ENCODE measurements at regions of chr1 and their contacts with region 1.

Region 1: DNA sequence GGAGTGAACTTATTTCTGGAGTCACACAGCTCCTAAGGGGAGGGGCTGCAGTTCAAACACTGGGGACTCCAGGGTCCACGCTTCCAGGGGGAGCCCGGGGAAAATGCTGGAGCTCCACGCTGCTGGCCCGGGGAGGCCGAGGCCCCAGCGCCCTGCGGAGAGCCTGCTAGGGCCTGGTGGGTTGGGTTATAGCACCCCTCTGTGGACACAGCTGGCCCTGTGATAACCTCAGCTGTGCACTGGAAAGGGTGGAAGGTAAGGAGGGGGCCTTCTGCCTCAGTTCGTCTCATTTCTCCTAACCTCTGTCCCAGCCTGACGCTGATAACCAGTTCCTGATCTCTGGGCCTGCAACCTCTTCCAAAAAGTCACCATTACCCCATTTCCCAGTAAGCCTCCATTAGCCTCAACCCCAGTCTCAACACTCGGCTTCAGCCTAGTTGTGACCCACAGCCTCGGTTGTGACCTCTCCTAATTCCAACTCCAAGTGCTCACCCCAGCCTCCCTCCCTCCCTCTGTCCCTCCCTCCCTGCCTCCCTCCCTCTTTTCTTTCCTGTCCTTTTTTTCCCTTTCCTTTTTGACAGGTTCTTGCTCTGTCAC is 7.1 kb downstream of the NBL1 start:
- DNase-seq: peak in 6 of 10 donors; percentile 33 to 77 (median 44)
- H3K4me3 ChIP-seq: peak overlapping the region in 10 of 59 donors; percentile 1 to 33 (median 10)
- H3K27ac ChIP-seq: peak overlapping the region in 43 of 59 donors; percentile 1 to 84 (median 61)
- H3K27me3 ChIP-seq: no peaks in the 10 kb centered on the region
- CTCF ChIP-seq: peak in 53 of 56 donors; percentile 38 to 83 (median 66)

Region 2: GRCh38 chr1:19240673-19241538 is 410.3 kb before region 1 on chr1:
- intact Hi-C with region 1: loop called in 1 of 2 experiments (anchors 5 kb)
- DNase-seq: peak in 9 of 10 donors; percentile 32 to 73 (median 60)
- H3K4me3 ChIP-seq: no peak overlapping the region
- H3K27ac ChIP-seq: peak overlapping the region in 52 of 59 donors; percentile 1 to 82 (median 56)
- H3K27me3 ChIP-seq: no peaks in the 10 kb centered on the region
- CTCF ChIP-seq: peak; percentile 72 to 99 (median 94)

Region 3: DNA sequence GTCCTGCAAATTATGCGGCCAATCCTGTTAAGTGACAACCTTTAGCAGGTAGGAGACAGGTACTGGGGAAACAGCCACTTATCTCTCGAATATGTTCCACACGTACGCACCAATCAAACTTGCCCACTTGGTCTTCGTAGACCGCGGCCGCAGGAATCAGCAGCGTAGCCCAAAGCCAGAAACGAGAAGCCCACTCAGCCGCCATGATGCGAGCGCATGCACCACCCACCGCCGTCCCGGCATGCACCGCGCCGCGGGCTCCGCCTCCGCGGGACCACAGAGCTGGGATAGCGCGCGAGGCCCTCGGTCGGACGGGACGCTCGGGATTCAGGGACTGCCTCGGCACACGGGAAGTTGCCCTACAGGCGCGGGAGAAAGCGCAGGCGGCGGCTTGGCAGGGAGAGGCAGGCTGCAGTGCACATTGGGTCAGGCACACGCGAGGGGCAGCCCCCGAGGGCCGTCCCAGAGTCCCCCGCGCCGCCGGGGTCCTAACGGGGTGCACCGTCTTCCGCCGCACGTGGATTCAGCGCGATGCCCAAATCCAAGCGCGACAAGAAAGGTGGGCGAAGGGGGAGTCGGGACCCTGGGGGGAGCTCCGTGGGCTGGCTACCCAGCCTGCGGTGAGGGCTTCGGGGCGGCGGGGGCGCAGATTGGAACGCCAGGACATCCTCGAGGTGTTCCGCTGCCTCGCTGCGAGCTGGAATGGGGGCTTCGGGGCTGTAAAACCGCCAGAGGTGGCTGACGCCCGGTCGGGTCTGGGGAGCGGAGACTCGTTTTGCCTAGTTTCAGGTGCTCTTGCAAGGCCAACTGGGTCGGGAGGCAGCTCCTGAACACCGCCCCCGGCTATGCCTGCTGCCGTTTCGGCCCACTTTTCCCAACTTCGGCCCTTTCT is 399.7 kb before region 1 on chr1 and contains the starts of genes EMC1 and MRTO4:
- intact Hi-C with region 1: loop called in 1 of 2 experiments (anchors 5 kb)
- DNase-seq: peak; percentile 81 to 94 (median 91)
- H3K4me3 ChIP-seq: peak within 1 kb of the TSS; percentile 45 to 100 (median 92)
- H3K27ac ChIP-seq: peak within 1 kb of the TSS; percentile 80 to 100 (median 99)
- H3K27me3 ChIP-seq: no peaks in the 10 kb centered on the region
- CTCF ChIP-seq: peak in 35 of 56 donors; percentile 5 to 54 (median 28)
- total RNA-seq, gene EMC1: 58.6 to 120 (median 88.1) TPM
- total RNA-seq, gene MRTO4: 18.3 to 47.2 (median 30.0) TPM

Region 4: DNA sequence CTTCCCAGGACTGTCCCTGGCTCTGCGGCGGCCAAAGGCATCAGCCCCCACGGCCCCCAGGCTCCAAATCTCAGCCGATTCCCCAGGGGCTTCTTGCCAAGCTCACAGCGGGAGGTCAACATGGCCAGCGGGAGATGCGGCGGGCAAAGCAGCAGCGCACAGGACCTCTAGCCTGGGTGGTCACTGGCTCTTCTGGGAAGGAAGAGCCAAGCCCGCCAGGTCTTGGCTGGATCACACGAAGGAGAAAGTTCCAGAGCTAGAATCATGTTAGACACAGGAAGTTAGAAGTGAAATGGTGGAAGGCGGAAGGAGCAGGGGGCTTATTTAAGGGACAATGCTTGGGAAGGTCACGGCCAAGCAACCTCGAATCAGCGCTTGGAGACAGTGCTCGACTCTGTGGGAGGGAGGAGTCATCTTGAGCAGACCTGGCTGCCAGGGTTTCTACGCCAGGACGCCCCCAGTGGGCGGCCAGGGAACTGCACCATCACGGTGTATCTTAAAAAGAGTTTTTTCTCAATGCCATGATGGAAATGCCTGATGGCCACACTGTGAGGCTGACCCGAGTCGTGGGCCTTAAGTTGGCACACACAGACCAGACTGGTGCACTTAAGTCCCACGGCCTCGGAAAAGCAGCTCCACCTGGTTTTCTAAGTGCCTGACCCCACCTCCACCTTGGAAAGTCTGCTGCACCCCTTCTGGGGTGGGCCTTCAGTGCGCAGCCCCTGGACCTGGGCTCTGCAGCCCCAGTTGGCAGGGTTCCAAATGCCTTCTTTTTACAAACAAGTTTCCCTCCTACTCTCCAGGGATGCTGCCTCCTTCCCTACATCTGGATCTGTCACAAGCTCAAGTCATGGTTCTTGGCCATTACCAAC is 309.8 kb before region 1 on chr1:
- intact Hi-C with region 1: loop called (anchors 2 kb)
- DNase-seq: peak in 9 of 10 donors; percentile 48 to 76 (median 71)
- H3K4me3 ChIP-seq: no peak overlapping the region
- H3K27ac ChIP-seq: peak overlapping the region in 22 of 59 donors; percentile 3 to 82 (median 38)
- H3K27me3 ChIP-seq: no peaks in the 10 kb centered on the region
- CTCF ChIP-seq: peak; percentile 58 to 91 (median 79)

Region 5: GRCh38 chr1:19390901-19391595 is 260.2 kb before region 1 on chr1:
- intact Hi-C with region 1: loop called (anchors 2 kb)
- DNase-seq: peak in 3 of 10 donors; percentile 40 to 60 (median 57)
- H3K4me3 ChIP-seq: peak overlapping the region in 10 of 59 donors; percentile 3 to 34 (median 9)
- H3K27ac ChIP-seq: peak overlapping the region in 57 of 59 donors; percentile 24 to 86 (median 68)
- H3K27me3 ChIP-seq: no peaks in the 10 kb centered on the region
- CTCF ChIP-seq: peak; percentile 57 to 94 (median 84)

Region 6: GRCh38 chr1:19596714-19597495 is 54.3 kb before region 1 on chr1:
- intact Hi-C with region 1: loop called in 1 of 2 experiments (anchors 5 kb)
- DNase-seq: peak; percentile 87 to 98 (median 96)
- H3K4me3 ChIP-seq: peak overlapping the region; percentile 73 to 100 (median 95)
- H3K27ac ChIP-seq: peak overlapping the region in 58 of 59 donors; percentile 60 to 97 (median 87)
- H3K27me3 ChIP-seq: no peaks in the 10 kb centered on the region
- CTCF ChIP-seq: peak in 12 of 56 donors; percentile 7 to 36 (median 22)

Region 7: GRCh38 chr1:19861034-19861433 is 209.8 kb after region 1 on chr1:
- intact Hi-C with region 1: no loop called
- DNase-seq: no peak
- H3K4me3 ChIP-seq: no peak overlapping the region
- H3K27ac ChIP-seq: no peak overlapping the region
- H3K27me3 ChIP-seq: peaks cover 0 to 19% (median 0%) of the 10 kb centered on the region in 45 donors
- CTCF ChIP-seq: no peak

Region 8: GRCh38 chr1:20223551-20224419 is 572.5 kb after region 1 on chr1:
- intact Hi-C with region 1: no loop called
- DNase-seq: no peak
- H3K4me3 ChIP-seq: no peak overlapping the region
- H3K27ac ChIP-seq: peak overlapping the region in 4 of 59 donors; percentile 4 to 38 (median 11)
- H3K27me3 ChIP-seq: peaks cover 0 to 28% (median 0%) of the 10 kb centered on the region in 45 donors
- CTCF ChIP-seq: no peak

Measured in dorsolateral prefrontal cortex (tissue), 120 donors.